Activated CD4-positive, alpha-beta memory T cell treated with anti-CD3 and anti-CD28 coated beads for 36 hours (primary cell): ENCODE measurements at regions of chr1 and their contacts with region 1.

Region 1: GRCh38 chr1:44799770-44800584 is at the start of gene PLK3:
- DNase-seq: peak; percentile 99
- H3K4me3 Mint-ChIP-seq: peak within 1 kb of the TSS; percentile 93
- H3K27ac Mint-ChIP-seq: peak within 1 kb of the TSS; percentile 95
- H3K4me1 Mint-ChIP-seq: peaks cover 34% of the 10 kb centered on the region
- H3K27me3 Mint-ChIP-seq: no peaks in the 10 kb centered on the region
- total RNA-seq, gene PLK3: 80.2 to 87.9 TPM

Region 2: GRCh38 chr1:44786138-44786840 is 13.7 kb before region 1 on chr1:
- CTCF ChIA-PET with region 1: interaction called, 11 read pairs
- POLR2A ChIA-PET with region 1: interaction called, 17 read pairs
- intact Hi-C with region 1: no loop called
- DNase-seq: peak; percentile 83
- H3K4me3 Mint-ChIP-seq: peak overlapping the region; percentile 73
- H3K27ac Mint-ChIP-seq: peak overlapping the region; percentile 31
- H3K4me1 Mint-ChIP-seq: peaks cover 31% of the 10 kb centered on the region
- H3K27me3 Mint-ChIP-seq: no peaks in the 10 kb centered on the region

Region 3: DNA sequence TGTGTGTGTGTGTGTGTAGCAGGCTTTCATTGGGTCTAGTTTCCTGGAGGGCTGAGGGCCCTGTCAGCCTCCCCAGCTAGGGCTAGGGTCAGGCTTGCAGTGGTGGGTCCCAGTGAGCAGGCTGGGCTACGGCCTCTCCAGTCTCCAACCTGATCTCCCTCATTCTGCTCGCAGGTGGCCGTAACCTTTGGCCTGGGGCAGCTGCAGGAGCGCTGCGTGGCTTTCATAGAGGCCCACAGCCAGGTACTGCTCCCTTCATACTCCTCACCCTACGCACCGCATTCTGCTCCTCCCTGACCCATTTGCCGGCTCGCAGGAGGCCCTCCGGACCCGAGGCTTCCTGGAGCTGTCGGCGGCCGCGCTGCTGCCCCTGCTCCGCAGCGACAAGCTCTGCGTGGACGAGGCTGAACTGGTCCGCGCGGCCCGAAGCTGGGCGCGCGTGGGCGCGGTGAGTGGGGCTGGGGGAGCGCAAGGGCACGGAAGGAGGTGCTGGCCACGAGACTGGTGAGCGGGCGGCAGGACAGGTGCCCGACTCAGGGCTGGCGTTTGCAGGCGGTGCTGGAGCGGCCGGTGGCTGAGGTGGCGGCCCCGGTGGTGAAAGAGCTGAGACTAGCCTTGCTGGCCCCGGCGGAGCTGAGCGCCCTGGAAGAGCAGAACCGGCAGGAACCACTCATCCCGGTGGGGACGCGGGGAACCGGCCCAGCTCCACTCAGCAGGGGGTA is 13.0 kb after region 1 on chr1:
- CTCF ChIA-PET with region 1: interaction called, 53 read pairs
- POLR2A ChIA-PET with region 1: interaction called, 404 read pairs
- intact Hi-C with region 1: loop called (anchors 1 kb)
- DNase-seq: no peak
- H3K4me3 Mint-ChIP-seq: peak overlapping the region; percentile 73
- H3K27ac Mint-ChIP-seq: peak overlapping the region; percentile 98
- H3K4me1 Mint-ChIP-seq: peaks cover 67% of the 10 kb centered on the region
- H3K27me3 Mint-ChIP-seq: no peaks in the 10 kb centered on the region